Activated CD4-positive, alpha-beta memory T cell treated with anti-CD3 and anti-CD28 coated beads for 36 hours (primary cell): ENCODE measurements at regions of chr3 and their contacts with region 1.

Region 1: DNA sequence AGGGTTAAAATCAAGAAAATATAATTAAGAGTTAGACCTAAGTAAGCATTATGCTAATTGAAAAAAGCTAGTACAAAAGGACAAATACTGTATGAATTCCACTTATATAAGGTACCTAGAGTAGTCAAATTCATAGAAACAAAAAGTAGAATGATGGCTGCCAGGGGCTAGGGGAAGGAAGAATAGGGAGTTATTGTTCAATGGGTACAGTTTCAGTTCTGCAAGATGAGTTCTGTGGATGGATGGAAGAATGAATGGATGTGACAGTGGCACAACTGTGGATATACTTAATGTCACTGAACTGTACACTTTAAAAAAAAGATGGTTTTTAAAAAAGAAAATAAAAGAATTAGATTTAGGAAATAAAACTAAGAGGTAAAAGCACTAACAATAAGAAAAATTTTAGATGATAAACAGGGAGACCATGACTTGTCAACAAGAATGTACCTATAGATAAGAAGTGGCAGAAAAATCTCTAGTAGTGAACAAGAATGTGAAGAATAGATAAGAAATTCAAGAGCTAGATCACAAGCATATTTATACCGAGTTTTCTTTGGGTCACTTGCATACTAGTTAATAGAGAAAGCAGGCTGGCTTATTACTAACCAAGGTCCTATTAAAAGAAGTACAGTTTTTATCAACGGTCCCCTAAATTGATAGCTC is 5.5 kb downstream of the IFT80 start:
- DNase-seq: no peak
- H3K4me3 Mint-ChIP-seq: no peak overlapping the region
- H3K27ac Mint-ChIP-seq: no peak overlapping the region
- H3K4me1 Mint-ChIP-seq: peaks cover 15% of the 10 kb centered on the region
- H3K27me3 Mint-ChIP-seq: no peaks in the 10 kb centered on the region

Region 2: DNA sequence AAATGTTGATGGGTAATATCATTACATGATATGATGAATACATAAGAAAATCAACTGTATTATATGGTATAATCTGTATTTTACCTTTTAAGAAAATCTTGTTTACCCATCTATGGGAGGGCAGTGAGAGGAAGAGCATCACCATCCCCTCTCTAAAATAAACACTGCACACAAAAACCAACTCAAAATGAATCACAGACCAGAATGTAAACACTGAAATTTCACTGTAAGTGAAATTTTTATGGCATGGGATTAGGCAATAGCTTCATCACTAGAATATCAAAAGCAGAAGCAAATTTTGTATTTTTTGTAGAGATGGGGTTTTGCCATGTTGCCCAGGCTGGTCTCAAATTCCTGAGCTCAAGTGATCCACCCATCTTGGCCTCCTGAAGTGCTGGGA is 20.7 kb before region 1 on chr3:
- CTCF ChIA-PET with region 1: no interaction called
- POLR2A ChIA-PET with region 1: no interaction called
- intact Hi-C with region 1: loop called (anchors 2 kb)
- DNase-seq: no peak
- H3K4me3 Mint-ChIP-seq: no peak overlapping the region
- H3K27ac Mint-ChIP-seq: no peak overlapping the region
- H3K4me1 Mint-ChIP-seq: peaks cover 18% of the 10 kb centered on the region
- H3K27me3 Mint-ChIP-seq: no peaks in the 10 kb centered on the region